ENCODE measurements at regions of chr3 and their contacts with region 1.

Region 1: DNA sequence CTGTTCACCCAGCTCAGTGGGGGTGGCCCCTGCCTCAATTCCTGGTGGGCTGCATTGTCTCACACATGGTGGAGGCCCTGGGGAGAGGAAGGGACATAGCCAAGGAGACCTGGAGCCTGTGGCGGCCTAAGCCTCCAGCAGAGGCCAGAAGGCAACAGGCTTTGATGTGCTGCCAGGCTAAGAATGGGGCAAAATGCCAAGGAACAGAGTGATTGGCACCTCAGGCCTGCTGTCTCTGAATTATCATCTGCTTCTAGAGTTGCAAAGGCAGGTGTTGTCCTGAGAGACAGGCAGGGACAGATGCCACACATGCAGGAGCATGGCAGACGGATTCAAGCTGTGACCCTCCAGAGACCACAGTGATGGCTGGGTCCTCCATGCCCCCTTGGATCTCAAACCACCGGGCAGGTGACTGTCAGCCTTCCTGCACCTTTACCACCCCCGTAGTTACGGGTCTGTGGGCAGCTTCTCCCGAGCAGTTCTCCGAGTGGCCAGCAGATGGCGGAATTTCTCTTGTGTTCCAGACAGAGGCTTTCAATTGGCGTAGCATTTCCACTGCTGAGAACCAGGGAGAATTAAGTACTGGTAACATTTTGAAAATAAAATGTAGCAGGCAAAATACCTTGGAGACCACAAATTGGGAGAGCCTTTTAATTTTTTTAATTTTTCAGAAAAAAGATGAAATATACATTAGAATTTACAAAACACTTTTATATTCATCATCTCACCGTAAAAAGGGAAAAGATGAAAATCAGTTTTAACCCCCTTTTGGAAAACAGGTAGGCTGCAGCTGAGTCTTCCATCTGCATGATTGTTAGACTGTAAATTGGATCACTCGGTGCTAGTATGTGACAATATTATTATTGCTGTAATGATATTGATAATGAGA is 525.5 kb upstream of the CFAP20DC start:
- DNase-seq: peak; percentile 92
- ATAC-seq: peak; percentile 86
- H3K4me3 Mint-ChIP-seq: no peak overlapping the region
- H3K27ac Mint-ChIP-seq: no peak overlapping the region
- H3K4me1 Mint-ChIP-seq: peaks cover 3% of the 10 kb centered on the region
- H3K27me3 Mint-ChIP-seq: peaks cover 2% of the 10 kb centered on the region

Region 2: GRCh38 chr3:59212128-59212779 is 363.1 kb before region 1 on chr3:
- CTCF ChIA-PET with region 1: interaction called, 3 read pairs
- POLR2A ChIA-PET with region 1: no interaction called
- intact Hi-C with region 1: loop called (anchors 2 to 5 kb)
- DNase-seq: no peak
- ATAC-seq: peak; percentile 74
- H3K4me3 Mint-ChIP-seq: no peak overlapping the region
- H3K27ac Mint-ChIP-seq: no peak overlapping the region
- H3K4me1 Mint-ChIP-seq: peaks cover 6% of the 10 kb centered on the region
- H3K27me3 Mint-ChIP-seq: peaks cover 12% of the 10 kb centered on the region

Region 3: GRCh38 chr3:59595830-59596229 is 20.5 kb after region 1 on chr3:
- CTCF ChIA-PET with region 1: interaction called, 22 read pairs
- POLR2A ChIA-PET with region 1: no interaction called
- intact Hi-C with region 1: no loop called
- DNase-seq: no peak
- ATAC-seq: no peak
- H3K4me3 Mint-ChIP-seq: no peak overlapping the region
- H3K27ac Mint-ChIP-seq: no peak overlapping the region
- H3K4me1 Mint-ChIP-seq: no peaks in the 10 kb centered on the region
- H3K27me3 Mint-ChIP-seq: peaks cover 2% of the 10 kb centered on the region

Region 4: DNA sequence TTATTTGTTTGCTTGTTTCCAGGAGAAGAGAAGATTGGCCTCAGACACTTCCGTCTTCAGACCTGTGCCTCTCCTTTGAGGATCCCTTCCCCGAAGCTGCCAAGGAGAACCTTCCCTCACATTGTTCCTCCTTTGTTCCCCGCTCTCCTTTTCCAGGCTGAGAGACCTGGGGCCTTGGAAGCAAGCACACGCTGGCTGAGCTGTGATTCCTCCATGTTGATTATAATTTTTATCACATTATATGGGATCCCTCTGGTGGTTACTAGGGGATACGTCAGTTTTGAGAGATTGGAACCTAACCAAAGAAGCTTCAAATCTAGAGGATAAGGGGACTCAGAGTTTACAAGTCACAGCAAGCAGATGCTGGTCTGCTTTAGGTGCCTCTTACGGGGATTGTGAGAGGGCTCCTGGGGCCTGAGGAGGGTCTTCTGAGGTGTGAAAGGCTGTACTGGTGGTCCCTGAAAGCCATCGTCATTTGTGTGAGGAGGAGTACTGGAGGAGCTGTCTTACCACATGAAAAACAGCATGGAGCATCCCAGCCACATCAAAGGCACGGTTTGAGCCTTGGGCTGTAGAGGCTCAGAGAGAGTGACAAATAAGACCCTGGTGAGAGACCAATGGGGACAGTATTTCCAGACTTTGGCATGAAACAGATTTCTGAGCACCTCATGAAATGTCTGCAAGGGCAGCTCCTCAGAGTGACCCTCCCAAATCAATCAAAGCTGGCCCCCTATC is 234.5 kb after region 1 on chr3:
- CTCF ChIA-PET with region 1: interaction called, 19 read pairs
- POLR2A ChIA-PET with region 1: no interaction called
- intact Hi-C with region 1: loop called (anchors 1 to 2 kb)
- DNase-seq: no peak
- ATAC-seq: peak; percentile 30
- H3K4me3 Mint-ChIP-seq: no peak overlapping the region
- H3K27ac Mint-ChIP-seq: no peak overlapping the region
- H3K4me1 Mint-ChIP-seq: peaks cover 6% of the 10 kb centered on the region
- H3K27me3 Mint-ChIP-seq: no peaks in the 10 kb centered on the region

Region 5: DNA sequence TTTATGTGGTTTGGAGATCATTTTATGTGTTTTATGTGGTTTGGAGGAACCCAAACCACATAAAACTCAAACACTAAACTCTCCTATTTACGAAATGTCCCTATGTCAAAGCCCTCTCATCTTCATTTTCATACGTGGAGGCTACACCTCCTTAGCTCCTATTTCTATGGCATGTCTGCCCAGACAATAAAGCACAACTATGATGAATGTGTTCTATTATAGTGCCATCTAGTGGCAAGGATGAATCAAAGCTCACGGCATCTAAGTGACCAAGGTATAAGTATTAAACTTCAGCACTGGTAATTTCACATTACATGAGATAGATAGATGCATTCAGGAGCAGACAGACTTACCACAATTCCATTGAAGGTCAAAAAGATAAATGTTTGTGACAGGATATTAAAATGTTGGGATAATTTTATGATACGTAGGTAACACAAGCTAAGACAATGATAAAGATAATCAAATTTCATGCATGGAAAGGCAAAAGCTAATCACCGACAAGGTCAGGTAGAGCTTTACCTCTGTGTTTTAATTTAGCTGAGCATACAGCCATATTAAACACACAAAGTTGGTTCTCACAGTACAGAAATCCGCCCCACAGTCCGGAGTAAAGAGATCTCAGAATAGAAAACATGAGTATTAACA is 1806.5 kb after region 1 on chr3:
- CTCF ChIA-PET with region 1: no interaction called
- POLR2A ChIA-PET with region 1: no interaction called
- intact Hi-C with region 1: loop called (anchors 5 kb)
- DNase-seq: no peak
- ATAC-seq: peak; percentile 87
- H3K4me3 Mint-ChIP-seq: no peak overlapping the region
- H3K27ac Mint-ChIP-seq: no peak overlapping the region
- H3K4me1 Mint-ChIP-seq: peaks cover 3% of the 10 kb centered on the region
- H3K27me3 Mint-ChIP-seq: peaks cover 17% of the 10 kb centered on the region

Measured in activated CD4-positive, alpha-beta T cell treated with anti-CD3 and anti-CD28 coated beads for 36 hours (primary cell).